B cell (primary cell): ENCODE measurements at regions of chr10 and their contacts with region 1.

Region 1: GRCh38 chr10:22648547-22648961 is 65.8 kb downstream of the PIP4K2A start:
- DNase-seq: no peak
- ATAC-seq: no peak
- H3K4me3 ChIP-seq: no peak overlapping the region
- H3K4me3 Mint-ChIP-seq: peak overlapping the region; percentile 58
- H3K27ac ChIP-seq: peak overlapping the region in 1 of 2 donors; percentile 46
- H3K27ac Mint-ChIP-seq: peak overlapping the region; percentile 56
- H3K4me1 ChIP-seq: peaks cover 86 to 88% of the 10 kb centered on the region in 2 donors
- H3K4me1 Mint-ChIP-seq: peaks cover 89% of the 10 kb centered on the region
- H3K27me3 ChIP-seq: no peaks in the 10 kb centered on the region
- H3K27me3 Mint-ChIP-seq: no peaks in the 10 kb centered on the region
- CTCF ChIP-seq: no peak

Region 2: DNA sequence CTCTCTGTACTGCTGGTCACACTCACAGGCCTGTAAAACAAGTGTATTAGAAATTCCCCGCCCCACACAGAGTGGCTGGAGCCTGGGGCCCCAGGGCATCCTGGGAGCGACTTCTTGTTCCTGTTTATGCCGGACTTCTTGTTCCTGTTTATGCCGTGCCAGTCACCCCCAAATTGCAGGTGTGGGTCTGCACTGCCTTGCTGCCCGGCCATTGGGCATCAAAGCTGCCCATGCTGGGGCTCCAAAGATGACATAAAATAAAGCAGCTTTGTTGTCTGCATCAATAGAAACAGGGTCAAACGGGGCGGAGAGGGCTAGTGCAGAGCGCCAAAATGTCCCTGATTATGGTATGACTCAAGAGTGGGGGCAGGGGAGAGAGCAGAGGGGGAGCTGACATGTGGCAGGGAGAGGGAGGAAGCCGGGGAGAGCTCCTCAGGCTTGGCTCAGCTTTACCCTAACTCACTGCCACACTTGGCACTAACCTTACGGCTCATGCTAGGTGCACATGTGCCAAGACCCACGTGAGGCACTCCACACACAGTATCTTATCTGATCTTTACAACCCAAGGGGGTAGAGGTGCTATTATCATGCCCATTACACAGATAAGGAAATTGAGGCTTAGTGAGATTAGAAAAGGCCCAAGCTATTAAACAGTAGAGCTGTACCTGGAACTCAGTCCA is 32.6 kb before region 1 on chr10:
- CTCF ChIA-PET with region 1: interaction called, 4 read pairs
- POLR2A ChIA-PET with region 1: no interaction called
- intact Hi-C with region 1: loop called (anchors 5 kb)
- DNase-seq: peak; percentile 72
- ATAC-seq: peak; percentile 75
- H3K4me3 ChIP-seq: peak overlapping the region in 3 of 5 experiments; percentile 7 to 45 (median 36)
- H3K4me3 Mint-ChIP-seq: peak overlapping the region; percentile 83
- H3K27ac ChIP-seq: peak overlapping the region; percentile 71 to 87
- H3K27ac Mint-ChIP-seq: peak overlapping the region; percentile 94
- H3K4me1 ChIP-seq: peaks cover 76 to 79% of the 10 kb centered on the region in 2 donors
- H3K4me1 Mint-ChIP-seq: peaks cover 95% of the 10 kb centered on the region
- H3K27me3 ChIP-seq: no peaks in the 10 kb centered on the region
- H3K27me3 Mint-ChIP-seq: no peaks in the 10 kb centered on the region
- CTCF ChIP-seq: no peak

Region 3: DNA sequence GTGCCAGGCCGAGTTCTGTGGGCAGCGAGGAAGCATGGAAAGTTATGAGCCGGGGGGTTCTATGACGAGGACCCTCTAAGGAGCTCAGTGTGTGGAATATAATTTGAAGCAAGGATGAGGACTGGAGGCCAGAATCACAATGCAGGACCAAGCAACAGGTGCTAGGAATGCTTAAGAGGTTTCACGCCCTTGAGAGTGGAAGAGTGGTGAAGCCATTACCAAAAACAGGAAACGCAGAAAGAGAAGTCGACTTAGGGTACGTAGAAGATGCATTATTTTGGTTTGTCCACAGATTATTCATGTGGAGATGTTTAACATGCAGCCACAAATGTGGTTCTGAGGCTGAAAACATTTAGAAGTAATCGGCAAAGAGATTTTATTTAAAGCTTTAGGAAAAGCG is 12.9 kb before region 1 on chr10:
- CTCF ChIA-PET with region 1: interaction called, 3 read pairs
- POLR2A ChIA-PET with region 1: interaction called, 3 read pairs
- intact Hi-C with region 1: loop called (anchors 2 kb)
- DNase-seq: peak; percentile 66
- ATAC-seq: peak; percentile 54
- H3K4me3 ChIP-seq: peak overlapping the region in 1 of 5 experiments; percentile 11
- H3K4me3 Mint-ChIP-seq: peak overlapping the region; percentile 69
- H3K27ac ChIP-seq: peak overlapping the region; percentile 69 to 88
- H3K27ac Mint-ChIP-seq: peak overlapping the region; percentile 93
- H3K4me1 ChIP-seq: peaks cover 55 to 62% of the 10 kb centered on the region in 2 donors
- H3K4me1 Mint-ChIP-seq: peaks cover 86% of the 10 kb centered on the region
- H3K27me3 ChIP-seq: no peaks in the 10 kb centered on the region
- H3K27me3 Mint-ChIP-seq: no peaks in the 10 kb centered on the region
- CTCF ChIP-seq: no peak